ENCODE measurements at regions of chr11 and their contacts with region 1.

Region 1: DNA sequence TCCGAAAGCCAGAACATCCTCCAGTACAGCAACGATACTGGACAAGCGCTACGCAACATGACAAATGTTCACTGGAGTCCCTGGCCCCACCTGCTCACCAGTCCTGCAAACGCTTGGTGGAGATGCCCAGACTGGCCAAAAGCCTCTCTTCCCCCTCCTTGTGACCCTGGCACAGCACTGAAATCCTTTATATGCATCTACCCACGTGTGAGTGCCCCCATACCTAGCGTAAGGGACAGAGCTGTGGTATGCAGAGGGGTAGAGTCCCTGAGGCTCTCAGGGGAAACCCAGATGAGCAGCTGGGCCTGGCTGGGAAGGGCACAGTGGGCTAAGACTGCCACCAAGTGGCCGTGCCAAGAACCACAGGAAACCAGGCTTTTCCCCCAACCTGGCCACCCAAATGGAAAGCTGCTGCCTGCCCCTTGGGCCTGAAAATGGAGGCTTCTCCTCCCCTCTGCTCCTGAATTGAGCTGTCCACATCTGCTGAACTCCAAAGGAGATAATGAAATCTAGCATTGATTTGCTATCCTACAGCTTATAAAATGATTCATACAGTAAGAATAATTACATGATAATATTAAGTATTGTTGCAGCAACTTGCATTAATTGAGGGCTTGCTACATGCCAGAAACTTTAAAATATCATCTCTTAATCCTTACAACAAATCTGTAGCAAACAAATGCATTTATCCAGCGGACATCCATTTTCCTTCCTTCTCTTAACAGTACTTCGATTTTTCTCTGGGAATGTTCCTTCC is 24.8 kb upstream of the TTC12 start:
- DNase-seq: peak; percentile 83
- H3K4me3 ChIP-seq: no peak overlapping the region; a peak in 1 of 4 replicates
- H3K27ac ChIP-seq: no peak overlapping the region
- H3K4me1 ChIP-seq: peaks cover 0 to 8% of the 10 kb centered on the region in 2 experiments; a peak in 2 of 4 replicates
- H3K27me3 ChIP-seq: no peaks in the 10 kb centered on the region
- CTCF ChIP-seq: peak; percentile 93
- EP300 ChIP-seq: no peak
- RAD21 ChIP-seq: peak; percentile 100

Region 2: DNA sequence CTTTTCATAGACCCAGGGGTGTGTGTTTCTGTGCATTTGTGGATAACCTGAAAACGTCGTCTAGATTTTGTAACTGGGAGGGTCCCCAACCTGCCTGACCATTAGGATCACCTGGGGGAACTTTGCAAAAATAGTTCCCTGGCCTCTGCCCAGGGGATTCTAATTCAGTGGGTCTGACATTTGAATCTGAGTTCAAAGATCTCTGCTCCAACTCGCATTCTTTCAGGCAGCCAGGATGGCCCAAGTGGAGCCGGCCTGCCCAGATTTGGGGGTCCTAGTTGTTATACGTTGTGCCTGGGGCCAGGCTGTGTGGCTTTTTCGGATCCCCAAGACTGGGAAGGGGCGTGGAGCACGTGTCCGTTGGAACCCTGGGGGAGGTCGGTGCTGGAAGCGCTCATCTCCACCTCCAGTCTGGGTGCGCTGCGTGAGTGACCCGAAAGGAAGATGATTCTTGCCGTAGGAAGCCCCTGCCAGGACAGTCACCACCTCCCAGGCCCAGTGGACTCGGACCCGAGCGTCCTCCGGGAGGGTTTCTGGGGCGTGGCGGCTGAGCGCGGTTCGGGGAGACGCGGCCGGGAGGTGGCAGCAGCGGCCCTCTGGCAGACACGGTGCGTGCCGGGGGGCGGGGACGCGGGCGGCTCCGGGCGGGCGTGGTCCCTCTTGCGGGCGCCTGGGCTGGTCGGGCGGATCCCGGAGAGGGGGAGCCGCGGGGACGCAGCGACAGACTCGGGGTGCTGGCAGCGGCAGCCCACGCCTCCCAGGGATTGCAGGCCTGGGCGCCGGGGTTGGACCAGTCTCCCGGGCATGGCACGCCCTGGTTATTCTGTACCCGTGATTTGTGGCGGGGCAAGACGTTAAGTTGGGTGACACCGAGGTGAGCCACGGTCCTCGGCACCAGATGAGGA is 999.8 kb before region 1 on chr11:
- CTCF ChIA-PET with region 1: interaction called, 34 read pairs
- POLR2A ChIA-PET with region 1: no interaction called
- DNase-seq: peak; percentile 97
- H3K4me3 ChIP-seq: peak overlapping the region; percentile 72 to 73
- H3K27ac ChIP-seq: peak overlapping the region in 1 of 2 experiments; percentile 4; a peak in 1 of 4 replicates
- H3K4me1 ChIP-seq: peaks cover 9 to 30% of the 10 kb centered on the region in 2 experiments
- H3K27me3 ChIP-seq: no peaks in the 10 kb centered on the region
- CTCF ChIP-seq: peak; percentile 81
- EP300 ChIP-seq: no peak; a peak in 1 of 4 replicates
- RAD21 ChIP-seq: peak; percentile 83

Region 3: GRCh38 chr11:112588252-112588694 is 701.3 kb before region 1 on chr11:
- CTCF ChIA-PET with region 1: interaction called, 136 read pairs
- POLR2A ChIA-PET with region 1: interaction called, 6 read pairs
- DNase-seq: peak; percentile 69
- H3K4me3 ChIP-seq: no peak overlapping the region
- H3K27ac ChIP-seq: peak overlapping the region in 1 of 2 experiments; percentile 62; a peak in 2 of 4 replicates
- H3K4me1 ChIP-seq: peaks cover 7% of the 10 kb centered on the region in 2 experiments; a peak in 3 of 4 replicates
- H3K27me3 ChIP-seq: no peaks in the 10 kb centered on the region
- CTCF ChIP-seq: peak; percentile 85
- EP300 ChIP-seq: no peak
- RAD21 ChIP-seq: peak; percentile 97

Region 4: GRCh38 chr11:112961146-112961668 is 328.4 kb before region 1 on chr11 and contains the start of gene NCAM1:
- CTCF ChIA-PET with region 1: interaction called, 13 read pairs
- POLR2A ChIA-PET with region 1: interaction called, 5 read pairs
- DNase-seq: peak; percentile 89
- H3K4me3 ChIP-seq: peak within 1 kb of the TSS; percentile 83 to 95
- H3K27ac ChIP-seq: peak within 1 kb of the TSS in 1 of 2 experiments; percentile 93; a peak in 3 of 4 replicates
- H3K4me1 ChIP-seq: peaks cover 0 to 13% of the 10 kb centered on the region in 2 experiments; a peak in 2 of 4 replicates
- H3K27me3 ChIP-seq: no peaks in the 10 kb centered on the region; the same call in 1 of the 2 replicates
- CTCF ChIP-seq: no peak
- EP300 ChIP-seq: peak; percentile 53 to 78; a peak in 3 of 4 replicates
- RAD21 ChIP-seq: peak; percentile 55
- polyA plus RNA-seq, gene NCAM1: 19.4 and 20.7 TPM in 2 replicates

Region 5: DNA sequence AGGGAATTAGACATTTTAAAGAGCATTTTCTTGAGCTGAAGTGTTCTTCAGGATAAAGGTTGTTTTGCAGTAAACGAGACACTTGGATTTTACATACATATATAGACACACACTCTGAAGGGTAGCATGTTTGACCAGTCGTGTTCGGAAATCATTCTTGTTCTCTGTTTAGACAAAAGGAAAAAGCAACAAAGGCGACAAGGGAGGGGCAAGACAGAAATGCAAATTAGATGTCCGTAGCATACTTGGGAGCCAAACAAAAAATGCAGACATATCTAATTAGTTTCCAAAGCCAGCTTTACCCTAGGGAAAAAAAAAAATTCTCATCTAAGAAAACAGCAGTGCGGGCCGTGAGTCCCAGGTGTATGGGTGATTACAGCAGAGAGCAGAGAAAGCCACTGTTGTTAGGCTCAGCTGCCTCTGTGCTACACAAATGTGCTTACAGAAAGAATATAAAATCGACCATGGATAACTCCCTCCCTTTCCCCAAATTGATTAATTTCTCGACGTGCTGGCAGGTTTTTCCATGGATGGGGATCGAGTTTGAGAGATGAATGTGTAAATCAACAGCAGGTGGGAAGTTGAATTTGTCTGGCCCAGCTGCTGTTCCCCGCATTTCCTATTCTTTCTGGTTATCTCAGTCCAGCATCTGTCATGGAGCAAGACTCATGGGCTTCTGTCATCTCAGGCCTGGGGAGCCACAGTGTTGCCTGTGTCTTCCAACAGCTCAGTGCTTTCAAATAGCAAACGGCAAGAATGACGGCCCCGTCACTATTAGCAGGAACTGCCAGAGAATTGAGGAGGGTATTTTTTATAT is 151.7 kb before region 1 on chr11:
- CTCF ChIA-PET with region 1: interaction called, 29 read pairs
- POLR2A ChIA-PET with region 1: no interaction called
- DNase-seq: peak; percentile 56
- H3K4me3 ChIP-seq: no peak overlapping the region
- H3K27ac ChIP-seq: peak overlapping the region in 1 of 2 experiments; percentile 95; a peak in 2 of 4 replicates
- H3K4me1 ChIP-seq: peaks cover 0 to 51% of the 10 kb centered on the region in 2 experiments; a peak in 2 of 4 replicates
- H3K27me3 ChIP-seq: no peaks in the 10 kb centered on the region
- CTCF ChIP-seq: no peak
- EP300 ChIP-seq: peak in 1 of 2 experiments; percentile 87; a peak in 2 of 4 replicates
- RAD21 ChIP-seq: peak; percentile 38

Region 6: DNA sequence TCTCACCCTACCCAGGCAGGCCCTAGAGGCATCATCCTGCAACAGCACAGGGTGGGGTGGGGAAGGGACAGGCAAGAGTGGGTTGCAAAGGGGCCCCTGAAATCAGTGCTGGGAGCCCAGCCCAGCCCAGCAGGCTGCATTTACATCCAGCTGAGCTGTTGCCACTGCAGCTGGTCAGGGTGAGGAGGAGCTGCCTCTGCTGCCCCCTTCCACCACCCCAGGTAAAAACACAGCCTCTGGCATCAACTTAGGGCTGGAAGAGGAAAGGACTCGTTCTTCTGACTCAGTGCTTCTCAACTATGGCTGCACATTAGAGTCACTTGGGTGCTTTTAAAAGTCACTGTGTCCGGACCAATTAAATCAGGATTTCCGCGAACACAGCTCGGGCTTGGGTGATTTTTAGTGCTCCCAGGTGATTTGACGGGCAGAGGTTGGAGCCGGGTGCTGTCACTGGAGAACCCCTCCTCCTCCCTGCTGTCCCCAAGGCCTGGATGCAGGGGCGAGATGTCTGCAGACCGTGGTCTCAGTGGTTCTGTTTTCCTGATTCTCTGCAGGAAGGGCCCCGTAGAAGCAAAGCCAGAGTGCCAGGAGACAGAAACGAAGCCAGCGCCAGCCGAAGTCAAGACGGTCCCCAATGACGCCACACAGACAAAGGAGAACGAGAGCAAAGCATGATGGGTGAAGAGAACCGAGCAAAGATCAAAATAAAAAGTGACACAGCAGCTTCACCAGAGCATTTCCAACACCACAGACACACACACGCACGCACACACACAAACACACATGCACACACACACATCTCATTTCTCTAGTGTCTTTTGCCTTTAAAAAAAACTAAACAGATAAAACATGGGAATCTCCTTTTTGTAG is 14.7 kb before region 1 on chr11:
- CTCF ChIA-PET with region 1: interaction called, 38 read pairs
- POLR2A ChIA-PET with region 1: no interaction called
- DNase-seq: peak; percentile 44
- H3K4me3 ChIP-seq: no peak overlapping the region
- H3K27ac ChIP-seq: peak overlapping the region in 1 of 2 experiments; percentile 89; a peak in 2 of 4 replicates
- H3K4me1 ChIP-seq: peaks cover 0 to 29% of the 10 kb centered on the region in 2 experiments; a peak in 1 of 4 replicates
- H3K27me3 ChIP-seq: no peaks in the 10 kb centered on the region
- CTCF ChIP-seq: peak; percentile 12; the same call in 1 of the 2 replicates
- EP300 ChIP-seq: no peak
- RAD21 ChIP-seq: peak; percentile 47

Region 7: GRCh38 chr11:113417428-113417827 is 127.8 kb after region 1 on chr11:
- CTCF ChIA-PET with region 1: no interaction called
- POLR2A ChIA-PET with region 1: no interaction called
- DNase-seq: no peak
- H3K4me3 ChIP-seq: no peak overlapping the region
- H3K27ac ChIP-seq: no peak overlapping the region
- H3K4me1 ChIP-seq: no peaks in the 10 kb centered on the region
- H3K27me3 ChIP-seq: no peaks in the 10 kb centered on the region
- CTCF ChIP-seq: no peak
- EP300 ChIP-seq: no peak
- RAD21 ChIP-seq: no peak

Region 8: GRCh38 chr11:113505541-113506375 is 216.1 kb after region 1 on chr11:
- CTCF ChIA-PET with region 1: no interaction called
- POLR2A ChIA-PET with region 1: no interaction called
- DNase-seq: peak; percentile 33
- H3K4me3 ChIP-seq: no peak overlapping the region
- H3K27ac ChIP-seq: no peak overlapping the region
- H3K4me1 ChIP-seq: peaks cover 6 to 11% of the 10 kb centered on the region in 2 experiments; a peak in 2 of 4 replicates
- H3K27me3 ChIP-seq: no peaks in the 10 kb centered on the region
- CTCF ChIP-seq: no peak
- EP300 ChIP-seq: no peak
- RAD21 ChIP-seq: no peak

Measured in SK-N-SH (cell line).